HEK293 (cell line): ENCODE measurements at regions of chr14 and their contacts with region 1.

Region 1: GRCh38 chr14:54857830-54858269 is 44.8 kb downstream of the GCH1 start:
- H3K4me3 ChIP-seq: no peak overlapping the region
- H3K27ac ChIP-seq: no peak overlapping the region
- H3K4me1 ChIP-seq: no peaks in the 10 kb centered on the region; the same call in 1 of the 2 replicates
- CTCF ChIP-seq: no peak

Region 2: GRCh38 chr14:54781961-54782750 is 75.7 kb before region 1 on chr14:
- CTCF ChIA-PET with region 1: no interaction called
- POLR2A ChIA-PET with region 1: no interaction called
- H3K4me3 ChIP-seq: no peak overlapping the region
- H3K27ac ChIP-seq: no peak overlapping the region
- H3K4me1 ChIP-seq: no peaks in the 10 kb centered on the region; the same call in 1 of the 2 replicates
- CTCF ChIP-seq: no peak

Region 3: DNA sequence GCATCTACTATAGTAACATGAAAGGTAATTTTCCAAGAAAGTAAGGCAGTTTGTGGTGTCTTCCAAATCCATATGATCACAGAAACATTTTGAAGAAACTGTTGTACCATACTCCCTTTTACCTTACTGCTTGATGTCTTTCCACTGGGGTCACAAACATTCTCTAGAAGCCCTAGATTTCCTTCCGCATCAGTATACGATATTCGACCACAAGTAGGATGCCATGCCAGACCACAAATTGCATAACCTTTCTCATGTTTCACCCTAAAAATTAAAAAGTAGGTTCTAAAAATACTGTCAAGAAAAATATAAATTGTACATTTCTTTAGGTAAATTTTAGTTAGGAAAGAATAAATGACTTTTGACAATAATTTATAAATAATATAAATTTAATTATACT is 142.5 kb after region 1 on chr14:
- CTCF ChIA-PET with region 1: no interaction called
- POLR2A ChIA-PET with region 1: interaction called, 13 read pairs
- H3K4me3 ChIP-seq: no peak overlapping the region
- H3K27ac ChIP-seq: no peak overlapping the region
- H3K4me1 ChIP-seq: no peaks in the 10 kb centered on the region
- CTCF ChIP-seq: no peak